PC-3 (cell line): ENCODE measurements at regions of chr3 and their contacts with region 1.

Region 1: DNA sequence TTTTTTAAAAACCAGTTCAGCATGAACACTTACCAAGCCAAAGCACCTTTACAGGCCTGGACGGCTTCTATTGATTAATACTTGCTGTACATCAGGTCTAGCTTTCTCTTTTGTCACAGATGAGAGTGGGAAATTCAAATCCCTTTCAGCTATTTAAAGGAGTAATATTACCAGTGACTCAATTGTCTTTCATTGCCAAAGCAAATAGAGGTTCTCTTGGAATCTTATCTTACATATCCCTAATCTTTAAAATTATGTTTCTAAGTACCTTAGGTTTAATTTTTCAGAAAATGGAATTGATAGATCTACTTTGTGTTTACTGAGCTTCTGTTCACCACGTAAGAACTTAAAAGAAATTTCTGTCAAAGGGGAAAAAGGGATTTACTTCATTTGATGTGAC is 922.9 kb downstream of the NSUN3 start:
- DNase-seq: peak; percentile 35
- ATAC-seq: peak; percentile 64
- H3K4me3 ChIP-seq: no peak overlapping the region
- H3K27ac ChIP-seq: no peak overlapping the region
- H3K4me1 ChIP-seq: no peaks in the 10 kb centered on the region
- H3K27me3 ChIP-seq: no peaks in the 10 kb centered on the region
- CTCF ChIP-seq: no peak

Region 2: GRCh38 chr3:94525043-94525442 is 460.8 kb before region 1 on chr3:
- CTCF ChIA-PET with region 1: no interaction called
- POLR2A ChIA-PET with region 1: no interaction called
- intact Hi-C with region 1: loop called (anchors 10 kb)
- DNase-seq: peak; percentile 51
- ATAC-seq: peak; percentile 95
- H3K4me3 ChIP-seq: no peak overlapping the region
- H3K27ac ChIP-seq: no peak overlapping the region
- H3K4me1 ChIP-seq: no peaks in the 10 kb centered on the region
- H3K27me3 ChIP-seq: no peaks in the 10 kb centered on the region
- CTCF ChIP-seq: peak; percentile 73

Region 3: GRCh38 chr3:94822298-94822697 is 163.5 kb before region 1 on chr3:
- CTCF ChIA-PET with region 1: no interaction called
- POLR2A ChIA-PET with region 1: no interaction called
- intact Hi-C with region 1: no loop called
- DNase-seq: peak; percentile 58
- ATAC-seq: peak; percentile 51
- H3K4me3 ChIP-seq: no peak overlapping the region
- H3K27ac ChIP-seq: no peak overlapping the region
- H3K4me1 ChIP-seq: 0 out of 2 replicates have a peak, but pooled peaks cover 4% of the 10 kb centered on the region
- H3K27me3 ChIP-seq: no peaks in the 10 kb centered on the region
- CTCF ChIP-seq: no peak

Region 4: GRCh38 chr3:95088464-95088863 is 102.7 kb after region 1 on chr3:
- CTCF ChIA-PET with region 1: no interaction called
- POLR2A ChIA-PET with region 1: no interaction called
- intact Hi-C with region 1: no loop called
- DNase-seq: no peak
- ATAC-seq: no peak
- H3K4me3 ChIP-seq: no peak overlapping the region
- H3K27ac ChIP-seq: no peak overlapping the region
- H3K4me1 ChIP-seq: no peaks in the 10 kb centered on the region
- H3K27me3 ChIP-seq: no peaks in the 10 kb centered on the region
- CTCF ChIP-seq: no peak

Region 5: DNA sequence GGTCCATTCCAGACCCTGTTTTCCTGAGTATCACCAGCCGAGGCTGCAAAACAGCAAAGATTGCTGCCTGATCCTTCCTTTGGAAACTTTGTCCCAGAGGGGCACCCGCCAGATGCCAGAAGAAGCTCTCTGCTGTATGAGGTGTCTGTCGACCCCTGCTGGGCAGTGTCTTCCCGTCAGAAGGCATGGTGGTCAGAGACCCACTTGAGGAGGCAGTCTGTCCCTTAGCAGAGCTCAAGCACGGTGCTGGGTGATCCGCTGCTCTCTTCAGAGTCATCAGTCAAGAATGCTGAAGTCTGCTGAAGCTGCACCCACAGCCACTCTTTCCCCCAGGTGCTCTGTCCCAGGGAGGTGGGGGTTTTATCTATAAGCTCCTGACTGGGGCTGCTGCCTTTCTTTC is 198.2 kb after region 1 on chr3:
- CTCF ChIA-PET with region 1: no interaction called
- POLR2A ChIA-PET with region 1: no interaction called
- intact Hi-C with region 1: no loop called
- DNase-seq: no peak
- ATAC-seq: no peak
- H3K4me3 ChIP-seq: no peak overlapping the region
- H3K27ac ChIP-seq: no peak overlapping the region
- H3K4me1 ChIP-seq: no peaks in the 10 kb centered on the region
- H3K27me3 ChIP-seq: no peaks in the 10 kb centered on the region
- CTCF ChIP-seq: no peak